ENCODE measurements at regions of chr1 and their contacts with region 1.

Region 1: DNA sequence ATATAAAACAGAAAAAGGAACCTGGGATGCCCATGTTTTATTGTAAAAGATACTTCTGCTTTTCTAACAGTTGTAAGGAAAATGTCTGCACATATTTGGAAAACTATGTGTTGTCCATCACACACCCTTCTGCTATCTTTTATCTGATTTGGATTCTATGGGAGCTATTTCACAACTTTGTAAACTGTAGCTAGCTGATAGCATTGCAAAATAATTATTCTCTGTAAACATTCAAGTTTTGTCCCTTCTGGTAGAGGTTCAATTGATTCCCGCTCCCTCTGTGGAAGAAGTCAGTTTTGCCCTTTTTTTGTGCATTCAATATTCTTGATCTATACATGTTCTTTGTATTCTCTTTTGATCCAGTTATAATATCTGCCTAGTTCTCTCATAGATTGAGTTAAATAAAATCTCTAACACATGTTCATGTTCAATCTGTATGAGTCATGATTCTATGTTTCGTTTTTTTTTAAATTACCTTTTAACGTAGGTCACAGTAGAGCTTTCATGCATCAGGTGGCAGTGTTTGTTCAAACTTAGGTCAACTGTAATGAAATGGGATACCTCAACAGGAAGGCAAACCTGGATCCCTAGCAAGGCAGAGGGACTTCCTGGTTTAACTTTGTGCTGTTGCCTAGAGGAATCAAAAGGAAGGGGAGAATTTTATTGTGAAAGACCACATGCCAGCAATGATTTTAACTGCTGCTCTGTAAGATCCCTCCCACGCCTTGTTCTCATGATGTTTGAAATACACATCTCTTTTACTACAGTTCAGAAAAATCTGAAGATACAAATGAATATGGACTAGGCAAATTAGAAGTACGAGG is 26.0 kb upstream of the BCL9 start:
- DNase-seq: no peak
- H3K4me3 Mint-ChIP-seq: no peak overlapping the region
- H3K27ac Mint-ChIP-seq: no peak overlapping the region
- H3K4me1 Mint-ChIP-seq: peaks cover 7% of the 10 kb centered on the region
- H3K27me3 Mint-ChIP-seq: peaks cover 11% of the 10 kb centered on the region

Region 2: GRCh38 chr1:147409886-147410285 is 105.4 kb before region 1 on chr1:
- intact Hi-C with region 1: no loop called
- DNase-seq: no peak
- H3K4me3 Mint-ChIP-seq: no peak overlapping the region
- H3K27ac Mint-ChIP-seq: no peak overlapping the region
- H3K4me1 Mint-ChIP-seq: no peaks in the 10 kb centered on the region
- H3K27me3 Mint-ChIP-seq: peaks cover 10% of the 10 kb centered on the region

Region 3: DNA sequence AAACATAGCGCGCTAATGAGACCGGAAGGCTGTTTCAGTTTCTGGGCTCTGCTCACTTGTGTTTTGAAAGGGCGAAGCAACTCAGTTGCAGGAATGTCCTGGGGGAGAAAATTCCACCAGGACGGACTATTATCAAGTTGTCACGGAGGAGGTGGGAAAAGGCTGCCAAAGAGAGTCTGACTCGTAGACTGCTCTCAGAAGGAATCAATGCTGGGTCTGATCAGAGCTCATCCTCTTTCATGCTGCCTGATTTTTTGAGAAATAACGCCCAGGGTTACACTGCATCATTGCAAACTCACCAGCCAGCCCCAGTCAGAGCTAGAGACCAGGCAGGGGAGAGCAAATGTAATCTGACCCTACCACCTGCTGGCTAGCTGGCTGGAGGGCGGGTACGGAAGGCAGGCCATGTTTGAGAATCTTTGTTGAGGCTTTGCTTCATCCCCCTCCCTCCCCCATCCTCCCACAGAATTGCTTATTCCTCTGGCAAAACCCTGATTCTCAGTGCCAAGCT is 10.4 kb before region 1 on chr1:
- intact Hi-C with region 1: no loop called
- DNase-seq: no peak
- H3K4me3 Mint-ChIP-seq: no peak overlapping the region
- H3K27ac Mint-ChIP-seq: no peak overlapping the region
- H3K4me1 Mint-ChIP-seq: no peaks in the 10 kb centered on the region
- H3K27me3 Mint-ChIP-seq: peaks cover 19% of the 10 kb centered on the region

Region 4: GRCh38 chr1:147558045-147558444 is 42.8 kb after region 1 on chr1:
- intact Hi-C with region 1: loop called (anchors 2 kb)
- DNase-seq: no peak
- H3K4me3 Mint-ChIP-seq: no peak overlapping the region
- H3K27ac Mint-ChIP-seq: no peak overlapping the region
- H3K4me1 Mint-ChIP-seq: no peaks in the 10 kb centered on the region
- H3K27me3 Mint-ChIP-seq: peaks cover 6% of the 10 kb centered on the region

Region 5: GRCh38 chr1:147585640-147586383 is 70.6 kb after region 1 on chr1:
- intact Hi-C with region 1: no loop called
- DNase-seq: no peak
- H3K4me3 Mint-ChIP-seq: no peak overlapping the region
- H3K27ac Mint-ChIP-seq: no peak overlapping the region
- H3K4me1 Mint-ChIP-seq: no peaks in the 10 kb centered on the region
- H3K27me3 Mint-ChIP-seq: peaks cover 20% of the 10 kb centered on the region

Region 6: DNA sequence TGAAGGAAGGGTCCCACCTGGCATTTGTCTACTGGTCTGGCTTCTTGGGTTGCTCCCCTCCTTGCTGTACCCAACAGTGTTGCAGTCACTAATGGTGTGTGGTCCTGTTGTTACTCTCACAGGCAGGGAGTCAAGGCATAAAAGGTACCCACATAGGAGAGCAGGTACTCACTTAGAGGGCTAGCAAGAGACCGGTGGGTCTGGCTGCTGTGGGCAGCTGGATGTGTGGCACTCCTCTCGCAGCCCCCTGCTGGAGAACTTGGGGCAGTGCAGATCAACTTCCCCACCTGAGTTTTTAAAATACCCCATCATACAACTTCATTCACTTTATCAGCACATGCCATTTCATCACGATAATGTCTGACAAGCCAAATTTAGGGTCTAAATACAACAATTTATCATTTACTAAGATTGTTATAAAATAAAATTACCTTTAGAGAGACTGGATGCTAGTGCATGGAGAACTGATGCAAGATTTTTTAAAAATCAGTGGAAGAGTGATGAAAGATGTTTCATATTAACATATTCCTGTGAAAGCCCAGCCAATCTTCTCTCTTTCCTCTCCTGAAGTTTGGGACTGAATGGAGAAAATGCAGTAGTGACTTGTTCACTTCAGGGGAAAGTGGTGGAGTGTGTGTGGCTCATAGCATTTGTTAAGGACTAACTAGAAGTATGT is 112.3 kb after region 1 on chr1:
- intact Hi-C with region 1: loop called (anchors 1 kb)
- DNase-seq: peak; percentile 20
- H3K4me3 Mint-ChIP-seq: no peak overlapping the region
- H3K27ac Mint-ChIP-seq: no peak overlapping the region
- H3K4me1 Mint-ChIP-seq: peaks cover 36% of the 10 kb centered on the region
- H3K27me3 Mint-ChIP-seq: no peaks in the 10 kb centered on the region